Prostate gland (tissue), 2 donors: ENCODE measurements at regions of chr22 and their contacts with region 1.

Region 1: GRCh38 chr22:42928969-42929837 is 72.1 kb upstream of the ARFGAP3 start:
- DNase-seq: no peak
- H3K4me3 ChIP-seq: no peak overlapping the region
- H3K27ac ChIP-seq: peak overlapping the region; percentile 82 to 93
- H3K4me1 ChIP-seq: peaks cover 50% of the 10 kb centered on the region
- H3K27me3 ChIP-seq: no peaks in the 10 kb centered on the region
- CTCF ChIP-seq: no peak
- POLR2A ChIP-seq: no peak

Region 2: GRCh38 chr22:42967933-42968332 is 38.7 kb after region 1 on chr22:
- intact Hi-C with region 1: loop called (anchors 1 kb)
- DNase-seq: no peak
- H3K4me3 ChIP-seq: no peak overlapping the region
- H3K27ac ChIP-seq: no peak overlapping the region
- H3K4me1 ChIP-seq: peaks cover 11% of the 10 kb centered on the region
- H3K27me3 ChIP-seq: no peaks in the 10 kb centered on the region
- CTCF ChIP-seq: peak in 1 of 4 experiments; percentile 20
- POLR2A ChIP-seq: no peak

Region 3: GRCh38 chr22:43126480-43127165 is 197.4 kb after region 1 on chr22:
- intact Hi-C with region 1: no loop called
- DNase-seq: no peak
- H3K4me3 ChIP-seq: no peak overlapping the region
- H3K27ac ChIP-seq: peak overlapping the region in 1 of 2 donors; percentile 11
- H3K4me1 ChIP-seq: no peaks in the 10 kb centered on the region
- H3K27me3 ChIP-seq: no peaks in the 10 kb centered on the region
- CTCF ChIP-seq: no peak
- POLR2A ChIP-seq: no peak